ENCODE measurements at regions of chr16 and their contacts with region 1.

Region 1: DNA sequence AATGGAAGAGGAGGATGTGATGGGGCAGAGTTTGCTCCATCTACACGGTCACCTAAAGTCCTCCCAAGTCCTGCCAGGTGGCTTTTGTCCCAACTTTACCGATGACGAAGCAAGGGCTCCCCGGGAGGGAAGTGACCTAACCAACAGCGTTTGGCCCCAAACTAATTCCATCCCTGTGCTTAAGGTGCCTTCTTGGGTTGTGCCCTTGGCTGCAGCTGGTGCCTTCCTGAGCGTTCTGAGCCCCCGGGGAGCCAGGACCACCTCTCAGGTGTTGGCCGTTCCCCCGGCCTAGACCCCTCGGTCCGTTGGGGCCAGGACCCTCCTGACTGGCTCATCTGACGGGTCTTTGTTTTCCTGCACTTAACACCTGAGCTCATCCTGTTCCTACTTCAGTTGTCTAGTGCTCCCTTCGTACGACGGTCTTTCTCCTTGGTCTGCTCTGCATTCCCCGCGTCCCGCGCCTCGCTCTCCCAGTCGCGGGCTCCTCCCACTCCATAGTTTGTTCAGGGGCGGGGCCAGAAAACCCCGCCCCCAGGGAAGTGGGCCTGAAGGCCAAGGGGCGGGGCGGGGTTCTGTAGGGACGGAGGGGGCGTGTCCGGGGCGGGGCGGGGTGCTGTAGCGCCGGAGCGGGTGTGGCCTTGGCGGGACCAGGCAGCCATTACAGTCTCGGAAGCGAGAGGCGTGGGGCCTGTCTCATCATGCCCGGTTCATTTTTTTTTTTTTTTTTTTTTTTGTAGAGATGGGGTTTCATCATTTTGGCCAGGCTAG is 822 bp upstream of the ZSCAN10 start:
- DNase-seq: peak; percentile 80 to 89 (median 82)
- H3K4me3 ChIP-seq: peak overlapping the region; percentile 19 to 23
- H3K4me3 Mint-ChIP-seq: peak overlapping the region; percentile 77 to 90 (median 86)
- H3K27ac ChIP-seq: peak overlapping the region; percentile 33
- H3K27ac Mint-ChIP-seq: peak overlapping the region; percentile 82 to 97 (median 93)
- H3K4me1 ChIP-seq: peaks cover 58% of the 10 kb centered on the region
- H3K4me1 Mint-ChIP-seq: peaks cover 19 to 68% (median 44%) of the 10 kb centered on the region in 4 donors
- H3K27me3 ChIP-seq: no peaks in the 10 kb centered on the region
- H3K27me3 Mint-ChIP-seq: no peaks in the 10 kb centered on the region

Region 2: DNA sequence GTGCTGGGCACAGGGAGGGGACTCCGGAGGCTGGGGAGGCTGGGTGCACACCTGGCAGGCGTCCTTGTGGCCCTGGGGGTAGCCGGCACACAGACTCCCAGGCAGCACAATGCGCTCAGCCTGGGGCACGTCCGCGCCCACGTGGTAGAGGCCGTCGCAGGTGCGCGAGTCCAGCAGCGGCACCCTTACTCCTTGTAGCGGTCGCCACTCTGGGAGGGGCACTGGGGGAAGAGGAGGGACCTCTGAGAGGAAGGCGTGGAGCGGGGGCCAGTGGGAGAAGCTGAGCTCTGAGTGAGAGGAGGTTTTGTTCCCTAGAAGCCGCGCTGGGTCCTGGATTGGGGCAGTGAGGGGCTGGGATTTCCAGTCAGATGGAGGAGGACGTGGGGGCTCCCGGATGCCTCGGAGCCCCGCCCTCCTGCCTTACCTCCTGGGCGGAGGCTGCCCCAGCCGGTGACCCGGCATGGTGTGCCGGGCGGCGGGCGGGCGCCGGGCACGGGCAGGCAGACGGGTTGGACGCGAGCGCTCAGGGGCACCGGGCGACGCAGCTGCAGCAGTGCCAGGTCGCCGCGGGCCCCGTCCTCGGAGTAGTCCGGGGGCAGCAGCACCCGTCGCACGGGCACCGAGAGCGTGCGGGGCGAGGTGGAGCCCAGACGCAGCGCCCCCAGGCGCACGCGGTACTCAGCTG is 314.8 kb before region 1 on chr16:
- CTCF ChIA-PET with region 1: no interaction called
- POLR2A ChIA-PET with region 1: no interaction called
- intact Hi-C with region 1: no loop called
- DNase-seq: peak in 4 of 5 donors; percentile 28 to 49 (median 36)
- H3K4me3 ChIP-seq: peak overlapping the region; percentile 11 to 59
- H3K4me3 Mint-ChIP-seq: peak overlapping the region; percentile 76 to 89 (median 88)
- H3K27ac ChIP-seq: no peak overlapping the region
- H3K27ac Mint-ChIP-seq: peak overlapping the region in 6 of 7 donors; percentile 29 to 86 (median 72)
- H3K4me1 ChIP-seq: peaks cover 16% of the 10 kb centered on the region
- H3K4me1 Mint-ChIP-seq: peaks cover 1 to 8% (median 5%) of the 10 kb centered on the region in 4 donors
- H3K27me3 ChIP-seq: no peaks in the 10 kb centered on the region
- H3K27me3 Mint-ChIP-seq: peaks cover 6 to 14% of the 10 kb centered on the region in 2 donors

Region 3: DNA sequence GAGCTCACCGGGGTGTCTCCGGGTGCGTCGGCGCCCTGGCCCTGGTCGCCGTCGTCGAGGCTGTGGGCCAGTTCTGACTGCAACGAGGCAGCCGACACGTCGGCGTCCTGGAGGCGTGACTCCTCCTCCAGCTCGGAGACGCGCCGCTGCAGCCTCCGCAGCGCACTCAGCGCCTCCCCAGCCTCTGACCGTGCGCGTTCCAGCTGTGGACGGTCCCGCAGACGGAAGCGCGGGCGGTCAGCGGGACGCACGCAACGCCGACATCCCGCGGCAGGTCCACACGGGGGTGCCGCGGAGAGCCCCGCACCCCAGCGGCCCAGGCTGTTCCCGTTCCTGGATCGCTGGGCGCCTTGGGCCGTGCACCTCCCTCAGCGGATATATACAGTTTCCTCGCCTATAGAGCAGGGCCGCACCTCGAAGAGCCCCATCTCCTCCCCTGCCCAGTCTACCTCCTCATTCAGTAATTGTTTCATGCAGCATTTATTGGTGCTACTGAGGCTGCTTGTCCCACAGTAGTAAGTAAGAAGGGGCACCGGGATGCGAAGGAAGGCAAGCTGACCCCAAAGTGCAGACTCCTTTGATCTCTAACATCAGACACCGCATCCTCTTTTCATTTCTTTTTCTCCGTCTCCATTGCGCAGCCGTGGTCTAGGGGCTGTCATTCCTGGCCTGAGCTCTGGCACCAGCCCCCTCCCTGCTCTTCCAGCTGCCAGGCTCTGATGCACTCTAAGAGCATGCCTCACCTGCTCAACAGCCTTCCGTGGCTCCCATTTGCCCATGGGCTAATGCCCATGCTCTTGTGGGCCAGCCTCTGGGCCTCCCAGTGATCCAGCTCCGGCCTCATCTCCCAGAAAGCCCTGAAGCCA is 70.1 kb before region 1 on chr16:
- CTCF ChIA-PET with region 1: interaction called, 9 read pairs
- POLR2A ChIA-PET with region 1: interaction called, 5 read pairs
- intact Hi-C with region 1: loop called (anchors 2 kb)
- DNase-seq: peak in 3 of 5 donors; percentile 36 to 43 (median 37)
- H3K4me3 ChIP-seq: peak overlapping the region in 1 of 2 donors; percentile 41
- H3K4me3 Mint-ChIP-seq: peak overlapping the region; percentile 52 to 88 (median 74)
- H3K27ac ChIP-seq: no peak overlapping the region
- H3K27ac Mint-ChIP-seq: peak overlapping the region in 1 of 7 donors; percentile 81
- H3K4me1 ChIP-seq: peaks cover 25% of the 10 kb centered on the region
- H3K4me1 Mint-ChIP-seq: peaks cover 11 to 32% (median 19%) of the 10 kb centered on the region in 4 donors
- H3K27me3 ChIP-seq: peaks cover 13% of the 10 kb centered on the region
- H3K27me3 Mint-ChIP-seq: peaks cover 22 to 25% of the 10 kb centered on the region in 2 donors

Region 4: DNA sequence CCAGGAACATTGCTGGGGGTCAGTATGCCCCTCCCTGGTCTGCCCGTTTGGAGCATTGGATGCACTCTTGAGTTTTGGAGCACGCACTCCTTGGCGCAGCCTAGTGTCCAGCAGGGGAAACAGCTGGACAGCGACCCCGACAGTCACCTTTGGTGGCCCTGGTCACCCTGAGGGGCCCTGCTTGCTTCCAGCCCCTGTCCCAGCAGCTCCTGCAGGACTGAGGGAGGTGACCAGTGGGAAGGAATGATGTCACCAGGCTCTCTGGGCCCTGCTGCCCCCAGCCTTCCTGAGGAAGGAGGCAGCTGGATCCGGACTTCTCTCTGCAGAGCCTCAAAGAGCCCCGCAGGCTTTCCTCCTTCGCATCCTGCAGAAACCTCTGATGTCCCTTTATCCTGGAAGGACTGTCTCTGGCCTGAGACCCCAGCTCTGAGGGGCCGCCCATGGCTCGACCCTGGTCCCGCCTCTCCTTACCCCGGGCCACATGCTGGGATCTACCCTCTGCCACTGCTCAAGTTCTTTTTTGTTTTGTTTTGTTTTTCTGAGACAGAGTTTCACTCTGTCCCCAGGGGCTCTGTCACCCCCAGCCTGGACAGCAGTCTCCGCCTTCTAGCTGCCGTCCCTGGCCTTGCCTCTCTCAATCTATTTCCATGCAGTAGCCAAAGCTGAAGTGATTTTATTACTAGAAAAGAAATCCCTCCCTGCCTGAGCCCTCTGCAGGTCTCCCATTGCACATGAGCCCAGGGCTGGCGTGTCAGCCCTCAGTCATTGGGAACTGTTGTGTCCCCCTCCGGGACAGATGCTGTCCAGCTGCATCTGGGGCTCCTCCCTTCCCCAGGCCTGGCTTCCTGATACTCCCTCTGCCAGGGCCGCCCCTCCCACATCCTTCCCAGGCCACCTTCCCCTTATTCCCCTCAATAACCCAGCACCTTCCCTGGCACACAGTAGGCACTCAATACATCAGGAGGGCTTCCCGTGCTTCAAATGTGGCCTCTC is 12.4 kb before region 1 on chr16:
- CTCF ChIA-PET with region 1: interaction called, 15 read pairs
- POLR2A ChIA-PET with region 1: interaction called, 6 read pairs
- intact Hi-C with region 1: no loop called
- DNase-seq: no peak
- H3K4me3 ChIP-seq: no peak overlapping the region
- H3K4me3 Mint-ChIP-seq: peak overlapping the region; percentile 10 to 83 (median 64)
- H3K27ac ChIP-seq: peak overlapping the region; percentile 10
- H3K27ac Mint-ChIP-seq: peak overlapping the region in 5 of 7 donors; percentile 72 to 85 (median 77)
- H3K4me1 ChIP-seq: peaks cover 39% of the 10 kb centered on the region
- H3K4me1 Mint-ChIP-seq: peaks cover 22 to 71% (median 38%) of the 10 kb centered on the region in 4 donors
- H3K27me3 ChIP-seq: no peaks in the 10 kb centered on the region
- H3K27me3 Mint-ChIP-seq: no peaks in the 10 kb centered on the region

Region 5: DNA sequence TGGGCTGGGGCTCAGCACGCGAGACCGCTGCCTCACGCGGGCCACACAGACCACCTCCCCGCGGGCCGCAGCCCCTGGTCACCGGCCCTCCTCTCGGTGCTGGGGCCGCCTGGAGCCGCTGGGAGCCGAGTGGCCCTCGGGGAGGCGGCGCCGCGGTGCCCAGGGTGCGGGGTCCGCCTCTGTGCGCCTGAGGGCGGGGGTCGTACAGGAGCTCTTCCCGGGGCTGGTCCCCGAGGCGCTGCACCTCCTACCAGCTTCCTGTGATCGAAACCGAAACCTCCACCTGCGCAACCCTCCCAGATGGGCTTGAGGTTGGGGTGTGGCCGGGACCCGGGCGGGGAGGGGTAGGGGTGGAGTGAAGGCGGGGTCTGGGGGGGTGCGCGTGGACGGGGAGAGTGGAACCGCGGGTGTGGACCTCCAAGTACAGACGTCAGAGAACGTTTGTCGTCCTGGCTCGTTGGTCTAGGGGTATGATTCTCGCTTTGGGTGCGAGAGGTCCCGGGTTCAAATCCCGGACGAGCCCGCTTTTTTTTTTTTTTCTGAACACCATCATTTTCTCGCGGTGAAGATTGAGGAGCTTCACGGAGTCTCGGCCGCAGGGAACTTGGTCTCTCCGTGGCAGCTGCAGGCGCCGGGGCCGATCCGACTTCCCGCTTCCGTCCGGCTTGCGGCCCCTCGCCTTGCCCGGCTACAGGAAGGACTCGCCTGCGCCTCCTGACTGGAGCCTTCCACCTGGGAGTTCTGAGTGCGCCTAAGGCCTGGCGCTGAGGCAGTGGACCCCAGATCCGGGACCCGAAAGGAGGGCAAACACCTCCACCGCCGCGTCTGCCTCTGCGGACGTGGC is 58.8 kb after region 1 on chr16:
- CTCF ChIA-PET with region 1: interaction called, 6 read pairs
- POLR2A ChIA-PET with region 1: interaction called, 17 read pairs
- intact Hi-C with region 1: no loop called
- DNase-seq: peak; percentile 92 to 98 (median 94)
- H3K4me3 ChIP-seq: peak overlapping the region; percentile 65 to 66
- H3K4me3 Mint-ChIP-seq: peak overlapping the region; percentile 83 to 96 (median 92)
- H3K27ac ChIP-seq: peak overlapping the region; percentile 62
- H3K27ac Mint-ChIP-seq: peak overlapping the region; percentile 92 to 100 (median 96)
- H3K4me1 ChIP-seq: peaks cover 25% of the 10 kb centered on the region
- H3K4me1 Mint-ChIP-seq: peaks cover 11 to 36% (median 25%) of the 10 kb centered on the region in 4 donors
- H3K27me3 ChIP-seq: no peaks in the 10 kb centered on the region
- H3K27me3 Mint-ChIP-seq: peaks cover 0 to 2% of the 10 kb centered on the region in 2 donors